ENCODE measurements at regions of chr5 and their contacts with region 1.

Region 1: GRCh38 chr5:140244525-140245025 is 58.3 kb downstream of the PFDN1 start:
- DNase-seq: peak; percentile 92
- ATAC-seq: peak; percentile 36 to 72 (median 52)
- H3K4me3 ChIP-seq: peak overlapping the region in 1 of 10 donors; percentile 11
- H3K27ac ChIP-seq: peak overlapping the region in 7 of 10 donors; percentile 41 to 90 (median 82)
- H3K4me1 ChIP-seq: peaks cover 53 to 97% (median 81%) of the 10 kb centered on the region in 9 donors
- H3K27me3 ChIP-seq: no peaks in the 10 kb centered on the region
- CTCF ChIP-seq: peak; percentile 88 to 95 (median 93)

Region 2: DNA sequence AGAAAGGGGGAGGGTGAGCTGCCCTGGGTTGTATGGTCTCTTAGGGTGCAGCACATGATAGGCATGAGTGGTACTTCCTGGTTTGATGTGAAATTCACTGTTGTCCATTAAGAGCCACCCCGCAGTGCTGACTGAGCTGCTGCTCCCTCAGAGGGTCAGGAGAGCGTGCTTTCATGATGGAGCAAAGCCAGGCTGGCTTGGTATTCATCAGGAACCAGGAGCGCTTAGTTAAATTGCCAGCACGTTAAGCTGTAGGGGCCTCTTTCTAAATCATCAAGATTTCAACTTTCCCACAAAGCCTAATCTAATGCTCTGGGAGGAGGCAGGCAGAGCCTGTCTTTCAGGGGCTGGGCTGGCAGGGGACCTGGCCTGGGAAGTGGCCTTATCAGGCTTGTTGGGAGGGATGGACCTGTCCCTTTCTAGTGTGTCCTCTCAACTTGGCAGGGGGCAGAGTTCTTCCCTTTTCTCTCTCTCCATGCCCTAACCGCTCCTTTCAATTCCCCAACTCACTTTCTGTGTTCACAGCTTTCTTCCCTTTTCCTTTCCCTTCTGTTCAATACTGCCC is 61.7 kb before region 1 on chr5:
- intact Hi-C with region 1: loop called in 6 of 10 experiments (anchors 5 to 10 kb)
- DNase-seq: peak in 1 of 2 donors; percentile 39
- ATAC-seq: peak; percentile 61 to 84 (median 73)
- H3K4me3 ChIP-seq: peak overlapping the region in 1 of 10 donors; percentile 9
- H3K27ac ChIP-seq: peak overlapping the region in 9 of 10 donors; percentile 9 to 83 (median 68)
- H3K4me1 ChIP-seq: peaks cover 18 to 78% (median 66%) of the 10 kb centered on the region in 9 donors
- H3K27me3 ChIP-seq: no peaks in the 10 kb centered on the region
- CTCF ChIP-seq: peak in 1 of 9 donors; percentile 4

Region 3: DNA sequence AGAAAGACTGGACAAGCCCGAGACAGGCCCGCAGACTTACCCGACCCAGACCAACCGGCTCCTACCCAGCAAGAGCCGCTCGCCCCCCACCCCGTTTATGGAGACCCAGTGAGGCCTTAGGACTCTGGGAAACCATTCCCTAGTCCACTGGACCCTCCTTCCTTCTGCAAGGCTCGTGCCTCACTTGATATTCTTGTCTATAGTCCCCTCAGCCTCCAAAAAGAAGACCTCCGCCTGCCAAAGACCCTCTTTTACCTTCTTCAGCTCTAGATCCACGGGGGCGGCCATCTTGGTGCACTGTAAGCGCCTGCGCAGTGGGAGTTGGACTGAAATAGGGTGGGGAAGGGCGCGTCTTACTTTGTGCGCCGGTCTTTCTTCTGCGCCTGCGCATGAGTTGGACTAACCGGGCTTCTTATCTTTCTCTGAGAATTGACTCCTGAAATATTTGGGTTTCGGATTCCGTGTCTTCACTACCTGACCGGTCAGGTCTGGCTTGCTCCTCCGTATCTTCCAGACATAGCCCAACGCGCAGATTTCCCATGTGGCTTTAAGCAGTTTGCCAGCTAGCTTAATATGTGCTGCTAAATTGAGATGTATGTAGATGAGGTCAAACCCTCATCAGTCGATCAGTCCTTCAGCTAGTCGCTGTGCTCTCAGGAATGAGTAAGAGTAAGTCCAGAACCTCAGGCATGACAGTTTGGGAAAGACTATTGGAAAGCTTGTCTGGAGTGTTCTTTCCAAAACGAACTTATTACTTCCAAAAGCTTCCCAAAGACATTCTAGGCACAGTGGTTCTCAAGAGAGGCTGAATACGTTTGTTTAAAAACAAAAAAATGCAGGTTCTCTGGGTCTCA is 58.4 kb after region 1 on chr5 and contains the start of gene PFDN1:
- intact Hi-C with region 1: loop called in 1 of 10 experiments (anchors 5 kb)
- DNase-seq: peak; percentile 92 to 96
- ATAC-seq: peak; percentile 95 to 99 (median 99)
- H3K4me3 ChIP-seq: peak within 1 kb of the TSS; percentile 70 to 88 (median 80)
- H3K27ac ChIP-seq: peak within 1 kb of the TSS; percentile 74 to 93 (median 86)
- H3K4me1 ChIP-seq: peaks cover 5 to 41% (median 36%) of the 10 kb centered on the region in 9 donors
- H3K27me3 ChIP-seq: no peaks in the 10 kb centered on the region
- CTCF ChIP-seq: no peak
- total RNA-seq, gene PFDN1: 56.8 to 94.0 (median 77.0) TPM

Region 4: GRCh38 chr5:140351609-140352334 is 107.2 kb after region 1 on chr5:
- intact Hi-C with region 1: loop called (anchors 1 to 5 kb)
- DNase-seq: peak in 1 of 2 donors; percentile 85
- ATAC-seq: peak in 7 of 8 donors; percentile 32 to 70 (median 51)
- H3K4me3 ChIP-seq: no peak overlapping the region
- H3K27ac ChIP-seq: no peak overlapping the region
- H3K4me1 ChIP-seq: peaks cover 11 to 25% (median 18%) of the 10 kb centered on the region in 9 donors
- H3K27me3 ChIP-seq: no peaks in the 10 kb centered on the region
- CTCF ChIP-seq: peak; percentile 84 to 93 (median 90)

Region 5: DNA sequence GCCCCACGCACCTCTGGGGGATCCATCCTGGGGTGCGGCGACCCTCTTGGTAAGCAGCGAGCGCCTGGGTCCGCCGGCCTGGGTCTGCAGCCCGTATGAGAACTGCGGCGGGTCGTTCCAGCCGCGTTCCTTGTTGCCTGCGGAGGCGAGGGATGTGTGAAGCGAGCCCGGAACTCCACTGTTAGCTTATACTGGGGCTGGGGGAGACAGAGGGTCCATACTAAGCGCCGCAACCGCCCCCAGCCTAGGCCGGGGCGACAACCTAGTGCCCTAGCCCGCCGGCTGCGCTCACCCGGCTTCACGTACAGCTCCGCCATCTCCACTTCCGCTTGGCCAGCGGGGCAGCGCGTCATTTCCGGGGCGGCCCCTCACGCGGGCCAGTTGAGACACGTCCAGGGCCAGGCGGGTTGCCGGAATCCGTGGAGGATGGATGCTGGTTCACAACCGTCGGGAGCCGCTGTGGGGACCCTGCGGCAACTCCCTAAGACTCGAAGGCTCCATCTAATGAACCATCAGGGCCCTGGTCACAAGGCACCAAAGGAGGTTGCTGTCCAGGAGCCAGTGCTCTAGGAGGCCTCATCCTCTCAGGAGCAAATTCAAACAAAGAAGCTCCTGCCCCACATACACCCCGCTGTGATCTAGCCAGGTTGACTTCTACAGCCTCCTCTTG is 312.7 kb after region 1 on chr5 and contains the start of gene SRA1:
- intact Hi-C with region 1: loop called in 1 of 10 experiments (anchors 10 kb)
- DNase-seq: peak; percentile 94
- ATAC-seq: peak; percentile 92 to 98 (median 97)
- H3K4me3 ChIP-seq: peak within 1 kb of the TSS; percentile 23 to 93 (median 71)
- H3K27ac ChIP-seq: peak within 1 kb of the TSS; percentile 44 to 98 (median 93)
- H3K4me1 ChIP-seq: peaks cover 8 to 58% (median 46%) of the 10 kb centered on the region in 9 donors
- H3K27me3 ChIP-seq: no peaks in the 10 kb centered on the region
- CTCF ChIP-seq: peak in 1 of 9 donors; percentile 10
- total RNA-seq, gene SRA1: 22.7 to 42.2 (median 32.5) TPM